ENCODE measurements at regions of chr11 and their contacts with region 1.

Region 1: DNA sequence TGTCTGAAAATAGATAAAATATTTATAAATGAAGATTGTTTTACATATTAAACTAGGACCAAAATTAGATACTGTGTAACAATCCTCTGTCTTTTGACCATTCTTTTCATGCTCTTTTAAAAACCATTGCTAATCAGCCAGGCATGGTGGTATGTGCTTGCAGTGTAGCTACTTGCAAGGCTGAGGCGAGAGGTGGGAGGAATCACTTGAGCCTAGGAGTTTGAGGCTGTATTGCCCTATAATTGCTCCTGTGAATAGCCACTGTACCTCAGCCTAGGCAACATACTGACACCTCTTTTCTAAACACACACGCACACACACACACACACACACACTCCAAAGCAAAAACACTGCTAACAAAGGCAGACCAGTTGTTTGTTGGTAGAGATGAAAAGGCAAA is 259.2 kb downstream of the JRKL start:
- DNase-seq: no peak
- ATAC-seq: no peak

Region 2: GRCh38 chr11:96696736-96697135 is 47.7 kb after region 1 on chr11:
- intact Hi-C with region 1: loop called in 1 of 2 experiments (anchors 5 kb)
- DNase-seq: no peak
- ATAC-seq: no peak

Region 3: DNA sequence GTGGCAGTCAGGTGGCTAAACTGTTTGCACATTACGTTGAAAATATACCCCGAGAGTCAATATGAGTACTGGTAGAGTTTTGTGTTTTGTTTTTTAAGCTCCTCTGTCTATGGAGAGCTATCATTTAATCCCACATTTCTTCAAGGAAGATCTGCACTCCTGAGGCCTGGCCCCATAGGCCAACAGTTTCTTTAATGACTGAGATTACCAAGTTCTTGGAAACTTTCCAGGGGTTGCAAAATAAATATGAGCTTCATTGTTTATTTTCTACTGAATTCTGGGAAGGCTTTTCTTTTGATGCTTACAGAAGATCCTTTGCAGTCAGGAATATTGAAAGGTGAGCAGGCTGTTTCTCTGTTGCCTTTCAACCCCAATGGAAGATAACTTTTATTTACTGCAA is 192.8 kb after region 1 on chr11:
- intact Hi-C with region 1: no loop called
- DNase-seq: no peak
- ATAC-seq: no peak